ENCODE measurements at regions of chr7 and their contacts with region 1.

Region 1: GRCh38 chr7:71733107-71733870 is 601.3 kb downstream of the GALNT17 start:
- DNase-seq: peak; percentile 69 to 93 (median 83)
- ATAC-seq: peak; percentile 90
- H3K4me3 ChIP-seq: no peak overlapping the region
- H3K27ac ChIP-seq: no peak overlapping the region
- H3K4me1 ChIP-seq: no peaks in the 10 kb centered on the region
- H3K27me3 ChIP-seq: peaks cover 0 to 8% of the 10 kb centered on the region in 2 donors
- CTCF ChIP-seq: peak; percentile 82 to 88

Region 2: DNA sequence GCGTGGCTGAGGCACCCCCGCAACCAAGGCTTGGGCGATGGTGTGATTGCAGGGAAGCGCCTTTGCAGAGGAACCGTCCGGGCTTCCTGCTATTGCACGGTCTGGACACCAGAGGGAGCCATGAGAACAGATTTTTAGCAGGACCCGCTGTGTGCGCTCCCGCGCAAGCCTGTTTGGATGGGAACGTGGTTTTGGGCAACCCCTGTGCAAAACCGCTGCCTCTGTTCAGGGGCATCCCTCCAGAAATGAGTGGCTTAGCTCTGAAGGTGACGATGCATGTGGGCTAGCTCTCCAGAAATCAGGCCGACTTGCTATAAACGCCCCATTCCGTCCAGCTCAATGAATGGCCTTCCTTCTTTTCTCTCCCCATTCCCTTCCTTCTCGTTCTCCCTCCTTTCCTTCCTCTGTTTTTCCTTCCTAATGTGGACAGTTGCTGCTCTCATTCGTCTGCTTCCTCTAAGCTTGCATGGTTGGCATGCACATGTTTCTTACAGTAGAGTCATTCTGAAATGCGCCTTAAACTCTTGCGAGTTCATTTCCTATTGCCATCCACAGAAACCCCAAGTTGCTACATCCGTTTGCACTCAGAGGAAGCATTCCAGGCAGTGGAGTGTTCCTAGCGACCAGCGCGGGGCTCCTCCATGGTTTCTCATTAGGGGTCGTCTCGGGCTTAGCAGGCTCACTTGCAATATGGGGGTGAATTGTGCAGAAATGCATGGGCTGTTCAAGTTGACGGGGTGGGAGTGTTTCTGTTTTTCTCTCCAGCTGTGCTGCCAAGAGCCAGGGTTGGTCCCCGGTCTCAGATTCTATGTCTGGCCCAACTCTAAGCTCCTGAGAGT is 903.8 kb before region 1 on chr7:
- intact Hi-C with region 1: loop called in 1 of 2 experiments (anchors 10 kb)
- DNase-seq: peak; percentile 35 to 82 (median 60)
- ATAC-seq: peak; percentile 98
- H3K4me3 ChIP-seq: no peak overlapping the region
- H3K27ac ChIP-seq: no peak overlapping the region
- H3K4me1 ChIP-seq: peaks cover 0 to 9% of the 10 kb centered on the region in 2 donors
- H3K27me3 ChIP-seq: peaks cover 0 to 19% of the 10 kb centered on the region in 2 donors
- CTCF ChIP-seq: peak; percentile 88 to 90

Region 3: DNA sequence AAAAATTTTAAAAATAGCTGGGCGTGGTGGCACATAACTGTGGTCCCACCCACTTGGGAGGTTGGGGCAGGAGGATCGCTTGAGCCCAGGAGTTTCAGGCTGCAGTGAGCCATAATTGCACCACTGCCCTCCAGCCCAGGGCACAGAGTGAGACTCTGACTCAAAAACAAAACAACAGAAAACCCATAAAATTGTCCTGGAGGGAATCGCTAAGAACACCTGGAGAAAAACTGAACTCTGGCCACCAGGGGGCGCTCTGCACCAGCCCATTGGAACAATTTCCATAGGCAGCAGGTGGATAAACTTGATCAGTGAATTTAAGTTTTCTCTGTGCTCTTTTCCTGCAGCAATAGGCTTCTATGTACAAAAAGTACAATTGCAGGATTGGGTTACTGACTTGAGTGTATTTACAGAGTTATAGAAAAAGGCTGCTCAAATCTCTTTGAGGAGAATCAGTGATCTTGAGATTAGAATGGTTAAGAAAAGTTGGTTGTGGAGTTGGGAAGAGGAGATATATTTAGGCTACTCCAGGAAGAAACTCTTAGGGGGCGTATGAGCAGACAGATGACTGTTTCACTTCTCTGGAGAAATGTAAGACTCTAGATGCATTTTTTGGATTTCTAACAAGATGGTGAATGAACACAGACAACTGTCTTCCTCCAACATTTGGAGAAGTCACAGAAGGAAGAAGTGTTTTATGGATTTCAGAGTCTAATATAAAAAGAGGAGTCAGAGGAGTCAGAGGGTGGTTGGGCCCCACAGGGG is 876.2 kb before region 1 on chr7:
- intact Hi-C with region 1: loop called in 1 of 2 experiments (anchors 5 kb)
- DNase-seq: peak; percentile 42 to 84 (median 68)
- ATAC-seq: peak; percentile 68
- H3K4me3 ChIP-seq: no peak overlapping the region
- H3K27ac ChIP-seq: no peak overlapping the region
- H3K4me1 ChIP-seq: no peaks in the 10 kb centered on the region
- H3K27me3 ChIP-seq: no peaks in the 10 kb centered on the region
- CTCF ChIP-seq: peak; percentile 78 to 93

Region 4: DNA sequence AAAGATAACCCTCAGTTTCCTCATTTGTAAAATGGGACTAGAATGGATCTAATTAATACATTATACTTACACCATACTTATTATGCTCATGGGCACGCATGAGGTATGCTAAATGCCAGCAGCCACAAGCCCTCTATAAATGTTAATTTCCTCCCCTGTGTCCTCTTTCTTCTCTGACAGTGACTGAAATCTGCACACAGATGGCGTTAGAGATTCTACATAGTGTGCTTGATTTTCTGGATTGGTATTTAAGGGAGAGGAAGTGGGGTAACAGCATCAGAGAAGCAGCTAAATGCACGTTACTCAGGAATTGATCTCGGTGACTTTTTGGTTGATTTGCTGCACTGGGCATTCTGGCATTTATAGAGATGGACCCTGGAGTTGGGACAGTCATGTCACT is 110.4 kb after region 1 on chr7:
- intact Hi-C with region 1: no loop called
- DNase-seq: no peak
- ATAC-seq: no peak
- H3K4me3 ChIP-seq: no peak overlapping the region
- H3K27ac ChIP-seq: no peak overlapping the region
- H3K4me1 ChIP-seq: no peaks in the 10 kb centered on the region
- H3K27me3 ChIP-seq: no peaks in the 10 kb centered on the region
- CTCF ChIP-seq: no peak

Region 5: GRCh38 chr7:71995111-71995510 is 261.8 kb after region 1 on chr7:
- intact Hi-C with region 1: no loop called
- DNase-seq: no peak
- ATAC-seq: no peak
- H3K4me3 ChIP-seq: no peak overlapping the region
- H3K27ac ChIP-seq: no peak overlapping the region
- H3K4me1 ChIP-seq: no peaks in the 10 kb centered on the region
- H3K27me3 ChIP-seq: no peaks in the 10 kb centered on the region
- CTCF ChIP-seq: no peak

Measured in left lung (tissue), 14 donors.